ENCODE measurements at regions of chr18 and their contacts with region 1.

Region 1: GRCh38 chr18:31942999-31943865 is at the start of gene TRAPPC8:
- DNase-seq: peak; percentile 99
- H3K4me3 Mint-ChIP-seq: peak within 1 kb of the TSS; percentile 93
- H3K27ac Mint-ChIP-seq: peak within 1 kb of the TSS; percentile 99
- H3K4me1 Mint-ChIP-seq: peaks cover 23% of the 10 kb centered on the region
- H3K27me3 Mint-ChIP-seq: no peaks in the 10 kb centered on the region
- CTCF ChIP-seq: no peak
- total RNA-seq, gene TRAPPC8: 29.0 and 33.9 TPM in 2 replicates

Region 2: DNA sequence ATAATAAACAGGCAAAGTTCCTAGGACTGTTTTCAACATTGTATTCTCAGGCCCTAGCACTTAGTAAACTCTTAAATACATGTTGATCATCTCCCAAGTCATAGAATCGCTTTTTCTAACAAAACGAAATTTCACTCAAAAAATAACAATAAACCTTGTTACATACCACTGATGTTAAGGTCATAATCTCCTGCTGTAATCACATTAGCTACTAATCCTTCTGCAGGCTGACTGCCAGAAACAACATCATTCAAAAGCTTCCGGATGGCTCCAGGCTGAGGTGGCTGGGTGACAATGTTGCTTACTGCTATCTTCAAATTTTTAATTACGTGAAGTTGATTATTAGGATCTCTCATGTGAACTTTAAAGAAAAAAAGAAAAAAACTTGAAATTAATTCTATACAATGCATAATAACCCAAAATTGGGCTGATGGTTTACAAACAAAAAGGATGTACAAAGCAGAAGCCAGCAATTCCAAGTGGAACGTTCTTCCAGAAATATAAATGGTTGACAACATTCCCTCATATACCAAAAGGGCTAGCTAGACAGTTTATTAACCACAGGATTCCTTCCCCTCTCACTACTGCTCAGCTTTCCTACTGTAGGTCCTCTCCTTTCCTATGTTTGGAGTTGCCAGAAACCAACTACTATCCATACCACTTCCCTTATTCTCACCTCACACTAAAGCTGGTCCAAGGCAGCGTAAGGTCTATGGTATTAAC is 11.9 kb before region 1 on chr18:
- CTCF ChIA-PET with region 1: no interaction called
- POLR2A ChIA-PET with region 1: interaction called, 12 read pairs
- intact Hi-C with region 1: no loop called
- DNase-seq: peak; percentile 50
- H3K4me3 Mint-ChIP-seq: no peak overlapping the region
- H3K27ac Mint-ChIP-seq: no peak overlapping the region
- H3K4me1 Mint-ChIP-seq: peaks cover 9% of the 10 kb centered on the region
- H3K27me3 Mint-ChIP-seq: no peaks in the 10 kb centered on the region
- CTCF ChIP-seq: no peak

Region 3: DNA sequence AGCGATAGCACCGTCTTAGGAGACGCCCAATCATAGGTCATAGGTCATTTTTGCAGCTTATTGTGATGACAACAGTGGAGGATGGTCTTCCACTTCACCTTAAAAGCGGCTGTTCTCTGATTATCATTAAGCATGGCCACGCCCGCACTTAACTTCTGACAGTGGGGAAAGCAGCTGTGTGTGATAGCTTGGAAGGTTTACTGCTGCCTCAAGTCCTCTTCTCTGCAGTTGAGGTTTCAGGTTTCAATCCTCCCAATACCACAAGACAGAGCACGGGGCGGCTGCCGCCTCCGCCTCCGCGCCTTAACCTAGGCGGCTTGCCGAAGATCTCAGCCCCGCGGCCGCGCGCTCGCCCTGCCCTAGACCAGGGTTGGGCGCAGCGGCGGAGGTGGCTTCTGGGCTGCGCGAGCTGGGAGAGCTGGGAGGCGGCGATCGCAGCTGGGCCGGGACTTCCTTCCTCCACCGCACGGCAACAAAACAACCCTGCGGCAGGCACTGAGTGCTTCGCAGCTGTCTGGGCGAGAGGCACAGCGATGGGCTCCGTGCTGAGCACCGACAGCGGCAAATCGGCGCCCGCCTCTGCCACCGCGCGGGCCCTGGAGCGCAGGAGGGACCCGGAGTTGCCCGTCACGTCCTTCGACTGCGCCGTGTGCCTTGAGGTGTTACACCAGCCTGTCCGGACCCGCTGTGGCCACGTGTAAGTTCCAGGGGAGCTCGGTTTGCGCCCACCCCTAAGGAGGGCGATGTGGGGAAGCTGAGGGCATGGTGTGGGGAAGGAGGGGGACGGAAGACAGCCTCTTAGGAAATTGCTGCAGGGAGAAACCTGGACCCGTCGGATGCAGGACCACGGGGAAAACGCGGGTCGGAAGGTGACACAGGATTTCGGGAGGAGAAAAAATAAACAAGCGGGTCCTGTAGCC is 75.4 kb after region 1 on chr18 and contains the start of gene RNF125:
- CTCF ChIA-PET with region 1: interaction called, 4 read pairs
- POLR2A ChIA-PET with region 1: interaction called, 92 read pairs
- intact Hi-C with region 1: loop called (anchors 2 kb)
- DNase-seq: peak; percentile 89
- H3K4me3 Mint-ChIP-seq: peak within 1 kb of the TSS; percentile 88
- H3K27ac Mint-ChIP-seq: peak within 1 kb of the TSS; percentile 27
- H3K4me1 Mint-ChIP-seq: peaks cover 11% of the 10 kb centered on the region
- H3K27me3 Mint-ChIP-seq: no peaks in the 10 kb centered on the region
- CTCF ChIP-seq: no peak
- total RNA-seq, gene RNF125: 3.5 and 6.2 TPM in 2 replicates

Region 4: GRCh38 chr18:32072321-32072720 is 129.1 kb after region 1 on chr18:
- CTCF ChIA-PET with region 1: interaction called, 14 read pairs
- POLR2A ChIA-PET with region 1: interaction called, 18 read pairs
- intact Hi-C with region 1: loop called (anchors 1 kb)
- DNase-seq: peak; percentile 30
- H3K4me3 Mint-ChIP-seq: no peak overlapping the region
- H3K27ac Mint-ChIP-seq: no peak overlapping the region
- H3K4me1 Mint-ChIP-seq: no peaks in the 10 kb centered on the region
- H3K27me3 Mint-ChIP-seq: no peaks in the 10 kb centered on the region
- CTCF ChIP-seq: peak; percentile 37

Region 5: DNA sequence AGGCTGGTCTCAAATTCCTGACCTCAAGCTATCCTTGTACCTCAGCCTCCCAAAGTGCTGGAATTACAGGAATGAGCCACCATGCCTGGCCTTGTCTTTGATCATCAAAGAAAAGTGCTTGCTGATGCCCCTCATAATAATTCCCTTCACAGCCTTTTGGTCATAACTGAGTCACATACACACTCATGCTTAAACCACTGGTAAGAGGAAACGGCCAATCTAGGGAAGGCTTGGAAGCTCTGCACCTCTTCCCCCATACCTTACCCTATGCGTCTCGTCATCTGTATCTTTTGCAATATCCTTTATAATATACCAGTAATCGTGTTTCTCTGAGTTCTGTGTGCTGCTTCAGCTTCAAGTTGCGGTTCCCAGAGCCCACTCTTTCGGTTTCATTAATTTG is 143.6 kb after region 1 on chr18:
- CTCF ChIA-PET with region 1: no interaction called
- POLR2A ChIA-PET with region 1: interaction called, 84 read pairs
- intact Hi-C with region 1: loop called (anchors 1 kb)
- DNase-seq: peak; percentile 23
- H3K4me3 Mint-ChIP-seq: no peak overlapping the region
- H3K27ac Mint-ChIP-seq: no peak overlapping the region
- H3K4me1 Mint-ChIP-seq: peaks cover 8% of the 10 kb centered on the region
- H3K27me3 Mint-ChIP-seq: no peaks in the 10 kb centered on the region
- CTCF ChIP-seq: no peak

Region 6: DNA sequence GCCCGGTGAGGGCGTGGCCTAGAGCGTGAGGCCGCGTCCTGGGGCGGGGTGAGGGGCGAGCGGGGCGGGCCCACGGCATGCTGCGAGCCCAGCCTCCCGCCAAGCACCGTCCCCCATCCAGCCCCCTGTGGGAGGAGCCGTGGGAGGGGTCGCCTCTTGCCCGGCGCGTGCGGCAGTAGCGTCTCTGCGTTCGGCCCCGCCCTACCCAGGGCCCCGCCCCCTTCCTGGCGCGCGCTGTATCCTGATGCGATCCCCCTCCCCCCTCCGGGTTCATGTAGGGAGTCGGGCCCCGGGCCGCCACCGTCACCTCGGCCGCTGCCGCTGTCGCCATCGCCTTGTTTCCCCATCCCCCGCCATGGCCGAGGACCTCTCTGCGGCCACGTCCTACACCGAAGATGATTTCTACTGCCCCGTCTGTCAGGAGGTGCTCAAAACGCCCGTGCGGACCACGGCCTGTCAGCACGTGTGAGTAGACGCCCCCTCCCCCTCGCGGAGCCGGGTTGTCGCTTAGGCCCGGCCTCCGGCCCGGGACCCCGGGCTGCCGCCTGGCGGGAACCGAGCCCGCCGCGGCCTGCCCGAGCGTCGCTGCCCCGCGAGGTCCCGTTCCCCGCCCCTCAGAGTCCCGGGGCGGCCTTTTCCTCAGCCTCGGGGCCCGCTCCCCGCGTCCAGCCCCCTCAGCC is 149.3 kb after region 1 on chr18:
- CTCF ChIA-PET with region 1: no interaction called
- POLR2A ChIA-PET with region 1: interaction called, 84 read pairs
- intact Hi-C with region 1: loop called (anchors 1 kb)
- DNase-seq: peak; percentile 96
- H3K4me3 Mint-ChIP-seq: peak overlapping the region; percentile 85
- H3K27ac Mint-ChIP-seq: peak overlapping the region; percentile 97
- H3K4me1 Mint-ChIP-seq: peaks cover 28% of the 10 kb centered on the region
- H3K27me3 Mint-ChIP-seq: no peaks in the 10 kb centered on the region
- CTCF ChIP-seq: no peak

Measured in MCF 10A (cell line).